ENCODE measurements at regions of chr12 and their contacts with region 1.

Region 1: GRCh38 chr12:120292661-120293531 is at the start of gene RNU4-1:
- DNase-seq: peak; percentile 94
- ATAC-seq: peak; percentile 59
- H3K4me3 ChIP-seq: peak within 1 kb of the TSS; percentile 61 to 87 (median 82)
- H3K4me3 Mint-ChIP-seq: no peak within 1 kb of the TSS
- H3K27ac ChIP-seq: peak within 1 kb of the TSS; percentile 99
- H3K27ac Mint-ChIP-seq: no peak within 1 kb of the TSS
- H3K4me1 ChIP-seq: peaks cover 14 to 20% of the 10 kb centered on the region in 2 donors
- H3K4me1 Mint-ChIP-seq: peaks cover 13% of the 10 kb centered on the region
- H3K27me3 ChIP-seq: no peaks in the 10 kb centered on the region
- H3K27me3 Mint-ChIP-seq: no peaks in the 10 kb centered on the region
- CTCF ChIP-seq: no peak
- total RNA-seq, gene RNU4-1: 3,269 and 3,426 TPM in 2 replicates

Region 2: GRCh38 chr12:119988782-119989668 is 303.9 kb before region 1 on chr12 and contains the start of gene BICDL1:
- CTCF ChIA-PET with region 1: no interaction called
- POLR2A ChIA-PET with region 1: no interaction called
- intact Hi-C with region 1: loop called (anchors 2 kb)
- DNase-seq: peak; percentile 98
- ATAC-seq: peak; percentile 82
- H3K4me3 ChIP-seq: peak within 1 kb of the TSS in 4 of 5 experiments; percentile 47 to 69 (median 59)
- H3K4me3 Mint-ChIP-seq: peak within 1 kb of the TSS; percentile 88
- H3K27ac ChIP-seq: peak within 1 kb of the TSS; percentile 41 to 67
- H3K27ac Mint-ChIP-seq: peak within 1 kb of the TSS; percentile 89
- H3K4me1 ChIP-seq: peaks cover 13 to 16% of the 10 kb centered on the region in 2 donors
- H3K4me1 Mint-ChIP-seq: peaks cover 24% of the 10 kb centered on the region
- H3K27me3 ChIP-seq: peaks cover 0 to 6% (median 0%) of the 10 kb centered on the region in 4 experiments
- H3K27me3 Mint-ChIP-seq: peaks cover 5% of the 10 kb centered on the region
- CTCF ChIP-seq: no peak
- total RNA-seq, gene BICDL1: 41.5 and 43.6 TPM in 2 replicates

Region 3: DNA sequence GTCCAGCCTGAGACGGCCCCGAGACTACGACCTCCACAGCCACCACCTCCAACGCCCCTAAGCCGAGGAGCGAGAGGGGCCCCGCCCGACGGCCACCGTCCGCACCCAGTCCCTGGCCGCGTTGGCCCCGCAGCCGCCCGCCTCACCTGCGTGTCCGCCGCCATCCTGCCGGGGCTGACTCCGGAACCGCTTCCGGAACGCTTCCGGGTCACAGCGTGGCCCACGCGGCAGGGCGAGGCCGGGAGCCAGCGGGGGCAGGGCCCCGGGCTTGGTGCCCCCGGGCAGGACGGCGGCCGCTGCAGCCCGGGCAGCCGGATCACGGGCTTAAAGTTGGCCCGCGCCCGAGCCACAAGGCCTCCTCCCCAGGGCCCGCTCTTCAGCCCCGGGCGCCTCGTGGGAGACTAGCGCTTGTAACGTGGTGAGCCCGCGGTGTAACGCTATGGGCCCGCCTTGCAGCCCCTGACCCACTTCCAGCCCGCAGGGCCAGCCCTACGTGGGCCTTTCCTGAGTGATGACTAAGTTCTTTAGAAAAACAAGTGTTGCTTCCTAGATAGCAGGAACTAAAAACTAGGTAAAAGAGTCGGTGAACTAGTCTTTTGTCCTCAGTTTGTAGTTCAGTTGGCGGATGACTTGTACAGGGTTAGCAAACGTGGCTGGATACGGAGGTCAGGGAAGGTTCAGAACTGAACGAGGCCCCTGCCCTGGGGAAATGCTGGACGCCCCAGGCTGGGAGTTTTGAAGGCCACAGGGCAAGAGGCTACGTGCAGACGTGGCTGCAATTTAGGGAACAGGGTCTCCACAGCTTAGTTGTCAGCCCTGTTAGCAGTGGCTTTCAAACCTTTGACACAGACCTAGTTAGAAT is 98.1 kb before region 1 on chr12 and contains the start of gene GCN1:
- CTCF ChIA-PET with region 1: no interaction called
- POLR2A ChIA-PET with region 1: interaction called, 47 read pairs
- intact Hi-C with region 1: no loop called
- DNase-seq: peak; percentile 89
- ATAC-seq: peak; percentile 96
- H3K4me3 ChIP-seq: peak within 1 kb of the TSS; percentile 74 to 89 (median 78)
- H3K4me3 Mint-ChIP-seq: peak within 1 kb of the TSS; percentile 90
- H3K27ac ChIP-seq: peak within 1 kb of the TSS; percentile 48 to 85
- H3K27ac Mint-ChIP-seq: peak within 1 kb of the TSS; percentile 89
- H3K4me1 ChIP-seq: peaks cover 24 to 35% of the 10 kb centered on the region in 2 donors
- H3K4me1 Mint-ChIP-seq: peaks cover 28% of the 10 kb centered on the region
- H3K27me3 ChIP-seq: no peaks in the 10 kb centered on the region
- H3K27me3 Mint-ChIP-seq: no peaks in the 10 kb centered on the region
- CTCF ChIP-seq: no peak
- total RNA-seq, gene GCN1: 127 and 160 TPM in 2 replicates

Region 4: DNA sequence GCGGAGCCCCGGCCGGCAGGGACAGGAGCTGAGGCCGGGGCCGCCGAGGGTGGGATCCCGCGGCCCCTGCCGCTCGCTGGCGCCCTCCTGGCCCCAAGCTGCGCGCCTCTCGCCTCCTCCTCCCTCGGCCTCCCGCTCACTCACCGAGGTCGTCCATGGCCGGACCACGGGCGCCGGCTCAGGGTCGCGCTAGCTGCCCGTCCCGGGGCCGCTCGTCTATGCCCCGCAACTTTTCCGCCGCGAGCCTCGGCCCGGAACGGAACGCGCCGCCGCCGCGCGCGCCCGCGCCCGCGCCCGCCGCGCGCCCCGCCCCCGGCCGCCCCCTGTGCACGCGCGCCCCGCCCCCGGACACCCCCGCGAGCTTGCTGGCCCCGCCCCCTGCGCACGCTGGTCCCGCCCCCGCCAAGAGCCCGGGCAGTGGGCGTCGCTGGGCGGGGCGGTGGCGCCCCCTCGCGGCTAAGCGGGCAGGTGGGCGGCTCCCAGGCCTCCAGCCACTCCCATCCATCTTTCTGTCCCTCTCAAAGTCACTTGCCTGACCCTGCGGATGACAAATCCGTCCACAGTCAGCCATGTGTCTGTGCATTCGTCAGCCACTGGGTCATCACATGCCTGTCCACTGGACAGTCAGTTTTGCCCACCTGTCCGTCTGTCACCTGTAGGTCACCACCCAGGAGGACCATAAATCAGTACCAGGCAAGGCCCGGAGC is 27.3 kb before region 1 on chr12 and contains the start of gene PXN:
- CTCF ChIA-PET with region 1: interaction called, 19 read pairs
- POLR2A ChIA-PET with region 1: interaction called, 18 read pairs
- intact Hi-C with region 1: loop called (anchors 1 kb)
- DNase-seq: peak; percentile 85
- ATAC-seq: peak; percentile 96
- H3K4me3 ChIP-seq: peak within 1 kb of the TSS; percentile 40 to 66 (median 60)
- H3K4me3 Mint-ChIP-seq: peak within 1 kb of the TSS; percentile 94
- H3K27ac ChIP-seq: no peak within 1 kb of the TSS
- H3K27ac Mint-ChIP-seq: peak within 1 kb of the TSS; percentile 70
- H3K4me1 ChIP-seq: peaks cover 28 to 35% of the 10 kb centered on the region in 2 donors
- H3K4me1 Mint-ChIP-seq: peaks cover 24% of the 10 kb centered on the region
- H3K27me3 ChIP-seq: peaks cover 0 to 74% (median 34%) of the 10 kb centered on the region in 4 experiments
- H3K27me3 Mint-ChIP-seq: peaks cover 40% of the 10 kb centered on the region
- CTCF ChIP-seq: peak; percentile 75
- total RNA-seq, gene PXN: 2.0 and 2.8 TPM in 2 replicates

Region 5: DNA sequence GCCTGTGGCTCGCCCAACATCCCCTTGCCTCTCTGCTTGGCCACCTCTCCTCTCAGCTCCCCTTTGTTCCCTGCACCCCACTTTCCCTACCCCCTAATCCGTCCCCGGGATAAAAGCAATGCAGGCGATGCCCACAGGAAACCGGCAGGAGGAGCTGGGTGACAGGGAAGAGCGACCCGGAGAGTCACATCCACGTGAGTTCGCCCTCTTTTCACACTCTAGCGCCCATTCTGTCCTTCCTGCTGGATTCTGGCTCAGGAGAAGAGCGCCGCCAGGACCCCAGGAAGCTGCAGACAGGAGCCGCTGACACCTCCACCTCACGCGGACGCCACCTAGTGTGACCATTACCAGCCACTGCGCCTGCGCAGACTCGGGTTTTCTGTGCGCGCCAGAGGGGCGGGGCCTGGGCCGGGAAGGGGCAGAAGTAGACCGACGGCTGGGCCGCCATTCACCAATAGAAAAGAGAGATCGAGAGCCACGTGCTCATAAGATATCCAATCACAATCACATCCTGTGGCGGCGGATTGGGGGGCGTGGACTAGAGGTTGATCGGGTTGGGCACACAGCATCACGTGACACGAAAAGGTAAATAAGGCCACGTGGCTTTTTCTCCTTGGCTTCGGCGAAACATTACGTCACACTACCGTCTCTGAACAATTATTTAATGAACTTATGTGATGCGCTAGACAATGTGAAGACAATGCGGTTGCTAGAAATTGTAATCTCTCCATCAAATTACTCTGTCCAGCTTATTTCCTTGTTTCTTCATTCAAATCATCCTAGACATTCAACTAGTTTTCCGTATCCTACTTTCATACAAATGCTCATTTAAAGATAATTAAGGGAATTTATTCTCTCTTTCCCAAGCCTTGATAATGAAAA is 24.6 kb after region 1 on chr12:
- CTCF ChIA-PET with region 1: interaction called, 6 read pairs
- POLR2A ChIA-PET with region 1: interaction called, 21 read pairs
- intact Hi-C with region 1: loop called (anchors 1 kb)
- DNase-seq: peak; percentile 99
- ATAC-seq: peak; percentile 99
- H3K4me3 ChIP-seq: peak overlapping the region; percentile 55 to 78 (median 66)
- H3K4me3 Mint-ChIP-seq: peak overlapping the region; percentile 76
- H3K27ac ChIP-seq: peak overlapping the region; percentile 86 to 95
- H3K27ac Mint-ChIP-seq: peak overlapping the region; percentile 75
- H3K4me1 ChIP-seq: peaks cover 10 to 13% of the 10 kb centered on the region in 2 donors
- H3K4me1 Mint-ChIP-seq: peaks cover 14% of the 10 kb centered on the region
- H3K27me3 ChIP-seq: peaks cover 0 to 6% (median 0%) of the 10 kb centered on the region in 4 experiments
- H3K27me3 Mint-ChIP-seq: peaks cover 3% of the 10 kb centered on the region
- CTCF ChIP-seq: peak; percentile 50

Region 6: GRCh38 chr12:120444676-120445075 is 151.8 kb after region 1 on chr12:
- CTCF ChIA-PET with region 1: no interaction called
- POLR2A ChIA-PET with region 1: no interaction called
- intact Hi-C with region 1: no loop called
- DNase-seq: no peak
- ATAC-seq: no peak
- H3K4me3 ChIP-seq: no peak overlapping the region
- H3K4me3 Mint-ChIP-seq: peak overlapping the region; percentile 96
- H3K27ac ChIP-seq: no peak overlapping the region
- H3K27ac Mint-ChIP-seq: peak overlapping the region; percentile 96
- H3K4me1 ChIP-seq: peaks cover 21 to 27% of the 10 kb centered on the region in 2 donors
- H3K4me1 Mint-ChIP-seq: peaks cover 44% of the 10 kb centered on the region
- H3K27me3 ChIP-seq: no peaks in the 10 kb centered on the region
- H3K27me3 Mint-ChIP-seq: no peaks in the 10 kb centered on the region
- CTCF ChIP-seq: no peak

Measured in B cell (primary cell).